ENCODE measurements at regions of chr9 and their contacts with region 1.

Region 1: DNA sequence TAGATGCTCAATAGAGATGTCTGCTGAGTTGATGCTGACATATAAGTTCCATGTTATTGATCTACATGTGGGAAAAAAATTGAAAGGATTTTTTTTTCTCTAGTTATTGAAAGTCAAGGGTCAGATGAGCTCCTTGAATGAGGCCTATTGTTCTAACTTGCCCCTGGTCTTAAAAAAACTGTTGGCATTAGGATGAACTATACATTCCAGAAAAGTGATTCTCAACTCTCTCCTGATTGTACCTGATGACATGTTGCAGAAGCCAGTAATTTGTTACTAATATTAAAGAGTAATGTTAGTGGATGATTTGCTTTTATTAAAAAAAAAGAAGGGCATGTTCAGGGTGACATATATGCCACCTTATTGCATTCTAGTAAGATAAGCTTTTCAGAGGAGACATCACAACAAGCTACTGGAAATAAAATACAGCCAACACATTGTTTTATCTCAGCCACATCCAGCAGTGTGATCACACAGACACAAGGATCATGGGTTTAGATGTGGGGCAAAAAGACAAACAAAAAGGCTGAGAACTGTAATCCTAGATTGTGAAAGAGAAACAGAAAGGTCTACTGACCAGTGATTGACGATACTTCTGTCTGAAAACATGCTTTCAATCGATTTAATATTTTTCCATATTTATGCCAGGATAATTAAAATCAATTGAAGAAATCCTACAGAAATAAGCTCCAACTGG is 1314.1 kb upstream of the C9orf72 start:
- DNase-seq: no peak
- ATAC-seq: no peak
- H3K4me3 ChIP-seq: no peak overlapping the region
- H3K27ac ChIP-seq: no peak overlapping the region
- H3K4me1 ChIP-seq: peaks cover 4% of the 10 kb centered on the region
- H3K27me3 ChIP-seq: no peaks in the 10 kb centered on the region
- CTCF ChIP-seq: no peak

Region 2: GRCh38 chr9:29006628-29007027 is 119.3 kb after region 1 on chr9:
- CTCF ChIA-PET with region 1: no interaction called
- POLR2A ChIA-PET with region 1: interaction called, 10 read pairs
- intact Hi-C with region 1: no loop called
- DNase-seq: peak; percentile 72
- ATAC-seq: peak; percentile 99
- H3K4me3 ChIP-seq: no peak overlapping the region
- H3K27ac ChIP-seq: no peak overlapping the region
- H3K4me1 ChIP-seq: peaks cover 10% of the 10 kb centered on the region
- H3K27me3 ChIP-seq: no peaks in the 10 kb centered on the region
- CTCF ChIP-seq: no peak